GM10248 (cell line): ENCODE measurements at regions of chr18 and their contacts with region 1.

Region 1: GRCh38 chr18:3177902-3178687 is 41.7 kb downstream of the MYOM1 start:
- DNase-seq: peak; percentile 82
- CTCF ChIP-seq: no peak

Region 2: DNA sequence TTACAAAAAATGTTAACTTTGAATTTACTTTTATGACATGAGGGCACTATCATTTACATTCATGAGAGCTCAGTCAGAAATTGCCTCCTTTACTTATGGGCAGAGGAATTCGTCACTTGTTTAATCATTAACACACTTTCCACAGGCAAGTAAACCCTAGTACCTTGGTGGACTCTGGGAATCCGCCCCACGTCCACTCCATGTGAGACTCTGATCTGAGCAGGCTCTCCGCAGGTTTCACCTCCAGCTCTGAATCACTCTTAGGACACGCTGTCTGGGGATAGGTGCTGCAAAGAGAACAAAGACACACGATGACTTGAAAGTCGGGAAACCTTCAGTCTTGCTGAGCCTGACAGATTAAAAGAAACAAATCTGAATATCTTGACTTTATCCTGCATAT is 238.8 kb before region 1 on chr18:
- CTCF ChIA-PET with region 1: no interaction called
- POLR2A ChIA-PET with region 1: no interaction called
- DNase-seq: no peak
- CTCF ChIP-seq: no peak

Region 3: DNA sequence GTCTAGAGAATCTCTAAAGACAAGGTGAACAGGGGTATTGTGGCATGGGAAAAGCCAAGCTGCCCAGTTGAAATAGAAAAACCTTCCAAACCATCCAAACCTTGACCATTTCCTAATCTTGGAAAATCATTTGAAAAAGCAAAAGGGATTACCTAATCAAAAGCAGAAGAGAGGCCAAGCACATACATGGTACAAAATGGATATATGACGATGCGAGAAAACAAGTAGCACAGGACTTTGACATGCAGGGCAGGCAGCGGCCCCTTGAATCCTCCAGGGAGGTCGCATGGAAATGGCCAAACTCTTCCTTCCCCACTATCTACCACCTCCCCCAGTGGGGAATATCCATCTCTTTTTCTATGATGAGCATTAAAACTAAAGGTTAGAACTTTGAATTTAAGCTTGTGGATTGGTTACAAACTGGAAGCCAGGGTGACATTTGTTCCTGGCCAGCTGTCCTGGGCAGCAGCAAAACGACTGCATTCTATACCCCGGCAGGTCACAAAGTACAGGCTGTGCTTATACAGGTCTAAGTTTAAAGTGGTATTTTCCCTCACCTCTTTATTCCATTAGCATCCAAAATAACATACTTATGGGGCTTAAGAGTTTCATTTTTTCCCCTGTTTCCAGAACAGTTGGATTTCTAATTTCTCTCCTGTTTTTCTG is 17.0 kb after region 1 on chr18:
- CTCF ChIA-PET with region 1: interaction called, 29 read pairs
- POLR2A ChIA-PET with region 1: no interaction called
- DNase-seq: no peak
- CTCF ChIP-seq: no peak

Region 4: DNA sequence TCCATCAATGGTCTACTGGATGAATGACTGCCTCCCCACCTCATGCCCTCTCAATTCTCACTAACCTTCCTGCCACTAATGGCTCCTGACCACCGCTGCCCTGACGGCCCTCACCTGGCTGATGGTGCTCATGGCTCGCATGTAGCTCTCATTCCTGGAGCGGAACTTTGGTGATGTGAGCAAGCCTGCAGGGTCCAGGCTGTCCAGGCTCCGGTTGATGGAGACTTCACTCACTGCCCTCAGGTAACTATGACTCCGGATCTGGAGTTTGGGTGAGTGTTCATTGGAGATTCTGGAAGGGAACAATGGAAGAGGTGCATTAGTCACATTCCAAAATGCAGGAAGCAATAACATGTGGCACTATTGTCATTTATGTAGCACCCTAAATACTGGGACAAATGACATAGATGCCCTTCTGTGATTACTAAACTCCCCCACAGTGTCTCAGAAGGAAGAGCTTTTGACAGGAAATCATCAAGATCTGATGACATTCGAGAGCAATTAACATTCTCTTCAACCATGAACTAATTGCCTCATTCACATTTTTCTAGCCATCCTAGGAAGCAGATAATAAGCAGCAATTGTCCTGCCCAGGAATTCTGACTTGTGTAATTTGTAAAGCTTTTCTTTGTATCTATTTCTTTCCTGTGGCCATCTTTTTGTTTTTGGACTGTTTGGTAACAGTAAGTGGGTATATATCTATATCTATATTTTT is 564.3 kb after region 1 on chr18:
- CTCF ChIA-PET with region 1: no interaction called
- POLR2A ChIA-PET with region 1: no interaction called
- DNase-seq: no peak
- CTCF ChIP-seq: no peak

Region 5: DNA sequence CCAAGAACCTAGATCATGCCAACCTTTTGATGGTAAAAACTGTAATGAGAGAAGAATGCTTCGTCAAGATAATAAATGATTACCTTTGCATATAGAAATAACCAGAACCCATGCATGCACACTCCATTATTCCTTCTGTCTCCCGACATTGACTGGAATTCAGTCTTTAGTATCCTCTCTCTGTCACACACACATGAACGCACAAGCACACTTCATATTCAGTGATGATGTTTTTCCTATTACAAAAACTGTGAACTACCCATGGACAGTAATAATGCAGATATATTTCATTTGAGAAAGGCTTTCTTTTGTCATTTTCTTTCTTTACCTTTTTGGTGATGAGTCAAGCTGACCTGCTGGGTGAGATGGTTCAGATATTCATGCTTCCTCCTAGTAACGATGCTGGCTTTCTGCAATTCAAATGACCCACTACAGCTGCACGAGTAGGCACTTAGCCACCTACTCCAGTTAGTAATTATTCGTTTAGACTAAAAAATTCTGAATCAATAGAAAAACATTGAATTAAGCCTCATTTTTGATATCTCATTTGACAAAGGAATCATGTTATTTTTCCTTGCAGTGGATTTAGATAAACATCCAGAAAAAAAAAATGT is 654.0 kb after region 1 on chr18:
- CTCF ChIA-PET with region 1: no interaction called
- POLR2A ChIA-PET with region 1: no interaction called
- DNase-seq: no peak
- CTCF ChIP-seq: no peak